CD4-positive, alpha-beta memory T cell (primary cell): ENCODE measurements at regions of chr16 and their contacts with region 1.

Region 1: DNA sequence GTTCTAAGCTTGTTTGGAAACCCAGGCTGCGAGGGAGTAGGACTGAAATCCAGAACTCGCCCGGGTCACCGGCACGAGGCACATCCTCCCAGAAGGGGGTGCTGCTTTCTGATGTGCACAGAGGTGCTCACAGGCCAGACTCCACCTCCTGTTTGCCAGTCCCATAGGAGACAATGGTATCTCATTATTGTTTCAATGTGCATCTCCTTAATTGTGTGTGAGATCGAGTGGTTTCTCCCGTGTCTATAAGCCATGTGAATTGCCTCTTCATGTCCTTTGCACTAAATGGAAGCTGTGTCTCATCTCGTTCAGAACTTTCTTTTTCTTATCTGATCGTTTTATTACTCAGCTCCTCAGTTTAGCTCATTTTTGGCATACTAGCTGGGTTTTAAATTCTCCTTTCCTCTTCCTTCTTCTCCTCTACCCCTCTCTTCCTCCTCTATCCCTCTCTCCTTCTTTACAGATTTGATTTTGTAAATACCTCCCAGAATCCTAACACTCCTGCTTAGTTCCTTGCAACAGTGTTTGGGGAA is 32.1 kb upstream of the PRKCB start:
- DNase-seq: peak; percentile 65 to 71 (median 68)
- H3K4me3 ChIP-seq: no peak overlapping the region
- H3K4me3 Mint-ChIP-seq: peak overlapping the region in 6 of 8 donors; percentile 9 to 56 (median 33)
- H3K27ac ChIP-seq: no peak overlapping the region
- H3K27ac Mint-ChIP-seq: peak overlapping the region in 3 of 7 donors; percentile 18 to 53 (median 34)
- H3K4me1 ChIP-seq: peaks cover 9% of the 10 kb centered on the region
- H3K4me1 Mint-ChIP-seq: peaks cover 8 to 11% (median 10%) of the 10 kb centered on the region in 4 donors
- H3K27me3 ChIP-seq: no peaks in the 10 kb centered on the region
- H3K27me3 Mint-ChIP-seq: no peaks in the 10 kb centered on the region

Region 2: GRCh38 chr16:23826528-23827045 is 22.9 kb after region 1 on chr16:
- CTCF ChIA-PET with region 1: interaction called, 66 read pairs
- POLR2A ChIA-PET with region 1: interaction called, 16 read pairs
- intact Hi-C with region 1: loop called (anchors 2 kb)
- DNase-seq: peak; percentile 58 to 78 (median 73)
- H3K4me3 ChIP-seq: peak overlapping the region; percentile 0 to 20
- H3K4me3 Mint-ChIP-seq: peak overlapping the region; percentile 55 to 84 (median 65)
- H3K27ac ChIP-seq: peak overlapping the region; percentile 36
- H3K27ac Mint-ChIP-seq: peak overlapping the region; percentile 88 to 97 (median 89)
- H3K4me1 ChIP-seq: peaks cover 40% of the 10 kb centered on the region
- H3K4me1 Mint-ChIP-seq: peaks cover 30 to 44% (median 36%) of the 10 kb centered on the region in 4 donors
- H3K27me3 ChIP-seq: no peaks in the 10 kb centered on the region
- H3K27me3 Mint-ChIP-seq: no peaks in the 10 kb centered on the region

Region 3: GRCh38 chr16:23842137-23842600 is 38.5 kb after region 1 on chr16:
- CTCF ChIA-PET with region 1: interaction called, 23 read pairs
- POLR2A ChIA-PET with region 1: interaction called, 11 read pairs
- intact Hi-C with region 1: loop called (anchors 1 kb)
- DNase-seq: no peak
- H3K4me3 ChIP-seq: no peak overlapping the region
- H3K4me3 Mint-ChIP-seq: peak overlapping the region in 5 of 8 donors; percentile 8 to 43 (median 36)
- H3K27ac ChIP-seq: no peak overlapping the region
- H3K27ac Mint-ChIP-seq: peak overlapping the region; percentile 15 to 86 (median 53)
- H3K4me1 ChIP-seq: peaks cover 63% of the 10 kb centered on the region
- H3K4me1 Mint-ChIP-seq: peaks cover 57 to 79% (median 62%) of the 10 kb centered on the region in 4 donors
- H3K27me3 ChIP-seq: no peaks in the 10 kb centered on the region
- H3K27me3 Mint-ChIP-seq: no peaks in the 10 kb centered on the region

Region 4: GRCh38 chr16:23863511-23864422 is 60.1 kb after region 1 on chr16:
- CTCF ChIA-PET with region 1: interaction called, 17 read pairs
- POLR2A ChIA-PET with region 1: interaction called, 3 read pairs
- intact Hi-C with region 1: loop called (anchors 5 kb)
- DNase-seq: peak; percentile 48 to 70 (median 62)
- H3K4me3 ChIP-seq: peak overlapping the region; percentile 48 to 71
- H3K4me3 Mint-ChIP-seq: peak overlapping the region; percentile 84 to 94 (median 90)
- H3K27ac ChIP-seq: peak overlapping the region; percentile 43
- H3K27ac Mint-ChIP-seq: peak overlapping the region; percentile 86 to 96 (median 88)
- H3K4me1 ChIP-seq: peaks cover 80% of the 10 kb centered on the region
- H3K4me1 Mint-ChIP-seq: peaks cover 59 to 88% (median 77%) of the 10 kb centered on the region in 4 donors
- H3K27me3 ChIP-seq: no peaks in the 10 kb centered on the region
- H3K27me3 Mint-ChIP-seq: no peaks in the 10 kb centered on the region

Region 5: GRCh38 chr16:23952128-23952970 is 148.7 kb after region 1 on chr16:
- CTCF ChIA-PET with region 1: interaction called, 12 read pairs
- POLR2A ChIA-PET with region 1: interaction called, 6 read pairs
- intact Hi-C with region 1: no loop called
- DNase-seq: peak in 1 of 5 donors; percentile 13
- H3K4me3 ChIP-seq: no peak overlapping the region
- H3K4me3 Mint-ChIP-seq: peak overlapping the region in 7 of 8 donors; percentile 52 to 81 (median 57)
- H3K27ac ChIP-seq: peak overlapping the region; percentile 21
- H3K27ac Mint-ChIP-seq: peak overlapping the region; percentile 83 to 96 (median 91)
- H3K4me1 ChIP-seq: peaks cover 93% of the 10 kb centered on the region
- H3K4me1 Mint-ChIP-seq: peaks cover 67 to 91% (median 80%) of the 10 kb centered on the region in 4 donors
- H3K27me3 ChIP-seq: no peaks in the 10 kb centered on the region
- H3K27me3 Mint-ChIP-seq: no peaks in the 10 kb centered on the region

Region 6: GRCh38 chr16:24027466-24027865 is 223.8 kb after region 1 on chr16:
- CTCF ChIA-PET with region 1: interaction called, 472 read pairs
- POLR2A ChIA-PET with region 1: no interaction called
- intact Hi-C with region 1: no loop called
- DNase-seq: no peak
- H3K4me3 ChIP-seq: no peak overlapping the region
- H3K4me3 Mint-ChIP-seq: no peak overlapping the region
- H3K27ac ChIP-seq: no peak overlapping the region
- H3K27ac Mint-ChIP-seq: peak overlapping the region in 1 of 7 donors; percentile 56
- H3K4me1 ChIP-seq: peaks cover 14% of the 10 kb centered on the region
- H3K4me1 Mint-ChIP-seq: peaks cover 23 to 49% (median 37%) of the 10 kb centered on the region in 4 donors
- H3K27me3 ChIP-seq: no peaks in the 10 kb centered on the region
- H3K27me3 Mint-ChIP-seq: no peaks in the 10 kb centered on the region

Region 7: DNA sequence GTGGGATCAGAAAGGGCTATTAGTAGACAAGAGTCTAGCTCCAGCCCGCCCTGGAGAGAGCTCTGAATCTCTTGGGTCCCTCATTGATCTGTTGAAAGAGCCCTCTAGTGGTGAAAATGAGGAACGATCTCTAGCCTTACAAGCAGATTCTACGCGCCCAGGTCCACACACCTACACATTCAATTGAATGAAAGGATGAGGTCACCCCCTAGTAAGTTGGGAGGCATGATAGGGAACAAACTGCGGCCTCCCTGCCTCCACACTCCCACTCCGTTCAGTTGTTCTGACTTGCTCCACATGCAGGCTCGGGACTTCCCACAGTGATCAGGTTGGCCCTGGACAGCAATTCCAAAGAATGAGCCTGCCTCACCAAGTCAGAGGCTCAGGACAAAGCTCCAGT is 449.5 kb after region 1 on chr16:
- CTCF ChIA-PET with region 1: interaction called, 17 read pairs
- POLR2A ChIA-PET with region 1: no interaction called
- intact Hi-C with region 1: loop called (anchors 1 kb)
- DNase-seq: peak in 4 of 5 donors; percentile 33 to 48 (median 42)
- H3K4me3 ChIP-seq: no peak overlapping the region
- H3K4me3 Mint-ChIP-seq: no peak overlapping the region
- H3K27ac ChIP-seq: no peak overlapping the region
- H3K27ac Mint-ChIP-seq: no peak overlapping the region
- H3K4me1 ChIP-seq: no peaks in the 10 kb centered on the region
- H3K4me1 Mint-ChIP-seq: peaks cover 0 to 7% (median 4%) of the 10 kb centered on the region in 4 donors
- H3K27me3 ChIP-seq: peaks cover 21% of the 10 kb centered on the region
- H3K27me3 Mint-ChIP-seq: peaks cover 38 to 42% of the 10 kb centered on the region in 2 donors